Ovary (tissue), 10 donors: ENCODE measurements at regions of chr1 and their contacts with region 1.

Region 1: GRCh38 chr1:22567197-22567596 is 3.9 kb downstream of the EPHA8 start:
- DNase-seq: no peak
- H3K4me3 ChIP-seq: no peak overlapping the region
- H3K27ac ChIP-seq: no peak overlapping the region
- H3K4me1 ChIP-seq: no peaks in the 10 kb centered on the region
- H3K27me3 ChIP-seq: no peaks in the 10 kb centered on the region
- CTCF ChIP-seq: no peak
- EP300 ChIP-seq: no peak
- POLR2A ChIP-seq: no peak

Region 2: DNA sequence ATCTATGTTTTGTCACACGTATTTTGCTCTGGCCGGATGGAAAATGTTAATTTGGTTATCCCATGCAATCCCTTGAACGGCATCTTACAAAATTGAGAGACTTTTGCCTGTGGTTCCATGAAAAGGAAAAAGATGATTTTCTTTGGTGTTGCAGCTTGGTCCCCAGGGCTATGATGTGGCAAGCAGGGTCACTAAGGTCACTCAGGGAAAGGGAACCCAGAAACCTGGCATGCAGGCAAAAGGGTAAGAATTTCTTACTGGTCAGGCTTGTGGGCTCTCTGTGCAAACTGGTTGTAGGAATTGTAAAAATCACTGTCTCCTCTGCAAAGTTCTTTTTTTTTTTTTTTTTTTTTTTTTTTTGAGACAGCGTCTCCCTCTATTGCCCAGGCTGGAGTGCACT is 1175.7 kb before region 1 on chr1:
- intact Hi-C with region 1: loop called in 1 of 4 experiments (anchors 5 kb)
- DNase-seq: no peak
- H3K4me3 ChIP-seq: no peak overlapping the region
- H3K27ac ChIP-seq: no peak overlapping the region
- H3K4me1 ChIP-seq: no peaks in the 10 kb centered on the region
- H3K27me3 ChIP-seq: no peaks in the 10 kb centered on the region
- CTCF ChIP-seq: no peak
- EP300 ChIP-seq: no peak
- POLR2A ChIP-seq: no peak

Region 3: GRCh38 chr1:22503721-22504410 is 63.3 kb before region 1 on chr1:
- intact Hi-C with region 1: no loop called
- DNase-seq: no peak
- H3K4me3 ChIP-seq: no peak overlapping the region
- H3K27ac ChIP-seq: no peak overlapping the region
- H3K4me1 ChIP-seq: peaks cover 8% of the 10 kb centered on the region
- H3K27me3 ChIP-seq: no peaks in the 10 kb centered on the region
- CTCF ChIP-seq: no peak
- EP300 ChIP-seq: no peak
- POLR2A ChIP-seq: no peak

Region 4: GRCh38 chr1:22689505-22689904 is 122.3 kb after region 1 on chr1:
- intact Hi-C with region 1: no loop called
- DNase-seq: no peak
- H3K4me3 ChIP-seq: no peak overlapping the region
- H3K27ac ChIP-seq: no peak overlapping the region
- H3K4me1 ChIP-seq: peaks cover 4% of the 10 kb centered on the region
- H3K27me3 ChIP-seq: no peaks in the 10 kb centered on the region
- CTCF ChIP-seq: no peak
- EP300 ChIP-seq: no peak
- POLR2A ChIP-seq: no peak